CD4-positive, alpha-beta memory T cell (primary cell): ENCODE measurements at regions of chr9 and their contacts with region 1.

Region 1: DNA sequence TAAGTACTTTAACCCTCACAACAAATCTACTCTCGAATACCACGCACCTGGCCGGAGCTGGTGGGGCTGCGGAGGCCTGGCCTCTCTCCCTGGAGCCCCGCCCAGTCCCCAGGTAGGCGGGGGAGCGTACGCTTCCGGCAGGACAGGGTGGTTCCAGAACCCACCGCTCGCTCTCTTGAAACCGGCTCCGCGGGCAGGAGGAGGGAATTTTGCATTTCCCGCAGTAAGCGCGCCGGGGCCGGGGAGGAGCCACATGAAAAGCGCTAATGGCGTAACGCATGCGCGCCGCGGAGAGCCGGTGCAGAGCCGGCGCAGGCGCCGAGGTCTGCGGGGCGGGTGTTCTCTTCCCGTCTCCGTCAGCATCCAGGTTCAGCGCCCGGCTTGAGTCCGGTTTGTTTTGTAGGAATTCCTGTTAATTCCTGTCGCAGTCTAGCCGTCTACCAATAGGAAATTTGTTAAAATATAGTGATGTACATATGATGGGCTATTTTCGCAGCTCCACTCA is 20.8 kb downstream of the CAVIN4 start:
- DNase-seq: peak; percentile 77 to 83 (median 81)
- H3K4me3 ChIP-seq: peak overlapping the region in 1 of 2 donors; percentile 59
- H3K4me3 Mint-ChIP-seq: peak overlapping the region; percentile 72 to 88 (median 86)
- H3K27ac ChIP-seq: peak overlapping the region; percentile 49
- H3K27ac Mint-ChIP-seq: peak overlapping the region; percentile 16 to 93 (median 58)
- H3K4me1 ChIP-seq: peaks cover 15% of the 10 kb centered on the region
- H3K4me1 Mint-ChIP-seq: peaks cover 14 to 34% (median 27%) of the 10 kb centered on the region in 4 donors
- H3K27me3 ChIP-seq: no peaks in the 10 kb centered on the region
- H3K27me3 Mint-ChIP-seq: peaks cover 0 to 3% of the 10 kb centered on the region in 2 donors

Region 2: DNA sequence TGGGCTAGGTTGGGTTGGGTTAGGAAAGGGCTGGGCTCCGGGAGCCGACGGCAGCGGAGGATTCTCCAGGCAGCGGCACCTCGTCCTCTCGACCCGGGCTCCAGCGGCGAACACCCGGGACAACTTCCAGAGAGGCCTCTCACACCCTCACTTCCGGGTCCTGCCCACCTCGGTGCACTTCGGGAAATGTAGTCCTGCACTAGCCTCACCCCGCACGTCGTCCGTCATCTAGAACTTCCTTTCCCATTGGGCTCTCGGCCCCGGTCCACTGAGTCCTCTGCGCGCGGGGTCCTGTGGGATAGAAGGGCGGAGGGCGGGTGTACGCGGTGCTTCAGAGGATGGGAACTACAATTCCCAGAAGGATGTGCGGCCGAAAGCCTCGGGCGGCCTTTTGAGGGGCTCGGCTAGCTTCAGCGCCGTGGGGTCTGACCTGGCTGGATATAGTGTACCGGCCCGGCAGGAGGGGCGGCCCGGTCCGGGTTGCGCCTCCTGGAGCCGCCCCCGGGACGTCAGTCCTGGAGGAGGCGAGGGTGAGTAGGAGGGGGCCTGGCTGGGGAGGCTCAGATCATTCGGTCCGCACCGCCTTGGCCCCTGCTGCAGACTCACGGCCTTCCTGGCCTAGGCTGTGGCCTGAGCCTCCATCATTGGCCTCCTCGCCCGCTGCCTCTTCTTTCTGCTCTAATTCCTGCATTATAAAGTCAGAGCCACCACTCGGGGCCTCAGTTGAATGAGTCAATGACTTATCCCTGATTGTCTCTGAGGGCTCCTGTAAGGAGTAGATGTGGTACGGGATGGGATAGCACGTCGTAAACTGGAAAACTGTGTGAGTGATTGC is 499.6 kb before region 1 on chr9 and contains the starts of genes ERP44 and INVS:
- CTCF ChIA-PET with region 1: no interaction called
- POLR2A ChIA-PET with region 1: no interaction called
- intact Hi-C with region 1: loop called (anchors 5 kb)
- DNase-seq: peak; percentile 96 to 99 (median 96)
- H3K4me3 ChIP-seq: peak within 1 kb of the TSS; percentile 85 to 89
- H3K4me3 Mint-ChIP-seq: peak within 1 kb of the TSS; percentile 94 to 100 (median 100)
- H3K27ac ChIP-seq: peak within 1 kb of the TSS; percentile 80
- H3K27ac Mint-ChIP-seq: peak within 1 kb of the TSS; percentile 91 to 99 (median 98)
- H3K4me1 ChIP-seq: peaks cover 26% of the 10 kb centered on the region
- H3K4me1 Mint-ChIP-seq: peaks cover 21 to 56% (median 36%) of the 10 kb centered on the region in 4 donors
- H3K27me3 ChIP-seq: no peaks in the 10 kb centered on the region
- H3K27me3 Mint-ChIP-seq: no peaks in the 10 kb centered on the region
- total RNA-seq, gene ERP44: 16.5 to 17.0 TPM
- total RNA-seq, gene INVS: 17.6 to 22.9 TPM

Region 3: GRCh38 chr9:100426530-100427428 is 171.9 kb before region 1 on chr9 and contains the start of gene MSANTD3:
- CTCF ChIA-PET with region 1: no interaction called
- POLR2A ChIA-PET with region 1: interaction called, 6 read pairs
- intact Hi-C with region 1: loop called (anchors 5 kb)
- DNase-seq: peak; percentile 39 to 57 (median 48)
- H3K4me3 ChIP-seq: peak within 1 kb of the TSS; percentile 64 to 72
- H3K4me3 Mint-ChIP-seq: peak within 1 kb of the TSS; percentile 94 to 99 (median 96)
- H3K27ac ChIP-seq: peak within 1 kb of the TSS; percentile 40
- H3K27ac Mint-ChIP-seq: peak within 1 kb of the TSS; percentile 92 to 97 (median 95)
- H3K4me1 ChIP-seq: peaks cover 26% of the 10 kb centered on the region
- H3K4me1 Mint-ChIP-seq: peaks cover 27 to 50% (median 35%) of the 10 kb centered on the region in 4 donors
- H3K27me3 ChIP-seq: no peaks in the 10 kb centered on the region
- H3K27me3 Mint-ChIP-seq: peaks cover 1% of the 10 kb centered on the region in 2 donors
- total RNA-seq, gene MSANTD3: 14.4 to 14.8 TPM

Region 4: DNA sequence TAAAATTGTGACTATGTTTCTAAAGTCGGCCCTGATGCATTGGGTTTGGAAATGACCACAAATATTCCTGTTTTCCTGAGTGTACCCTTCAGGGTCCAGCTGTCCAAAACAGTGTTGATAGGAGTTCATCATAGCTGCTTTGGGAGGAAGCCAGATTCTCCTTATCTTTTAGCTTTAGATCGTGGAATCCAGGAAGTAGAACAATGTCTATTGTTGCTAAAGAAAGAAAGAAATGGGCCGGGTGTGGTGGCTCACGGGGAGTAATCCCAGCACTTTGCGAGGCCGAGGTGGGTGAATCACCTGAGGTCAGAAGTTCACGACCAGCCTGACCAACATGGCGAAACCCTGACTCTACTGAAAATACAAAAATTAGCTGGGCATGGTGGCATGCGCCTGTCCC is 11.3 kb before region 1 on chr9:
- CTCF ChIA-PET with region 1: interaction called, 16 read pairs
- POLR2A ChIA-PET with region 1: no interaction called
- intact Hi-C with region 1: no loop called
- DNase-seq: no peak
- H3K4me3 ChIP-seq: no peak overlapping the region
- H3K4me3 Mint-ChIP-seq: no peak overlapping the region
- H3K27ac ChIP-seq: no peak overlapping the region
- H3K27ac Mint-ChIP-seq: no peak overlapping the region
- H3K4me1 ChIP-seq: no peaks in the 10 kb centered on the region
- H3K4me1 Mint-ChIP-seq: no peaks in the 10 kb centered on the region
- H3K27me3 ChIP-seq: no peaks in the 10 kb centered on the region
- H3K27me3 Mint-ChIP-seq: no peaks in the 10 kb centered on the region

Region 5: DNA sequence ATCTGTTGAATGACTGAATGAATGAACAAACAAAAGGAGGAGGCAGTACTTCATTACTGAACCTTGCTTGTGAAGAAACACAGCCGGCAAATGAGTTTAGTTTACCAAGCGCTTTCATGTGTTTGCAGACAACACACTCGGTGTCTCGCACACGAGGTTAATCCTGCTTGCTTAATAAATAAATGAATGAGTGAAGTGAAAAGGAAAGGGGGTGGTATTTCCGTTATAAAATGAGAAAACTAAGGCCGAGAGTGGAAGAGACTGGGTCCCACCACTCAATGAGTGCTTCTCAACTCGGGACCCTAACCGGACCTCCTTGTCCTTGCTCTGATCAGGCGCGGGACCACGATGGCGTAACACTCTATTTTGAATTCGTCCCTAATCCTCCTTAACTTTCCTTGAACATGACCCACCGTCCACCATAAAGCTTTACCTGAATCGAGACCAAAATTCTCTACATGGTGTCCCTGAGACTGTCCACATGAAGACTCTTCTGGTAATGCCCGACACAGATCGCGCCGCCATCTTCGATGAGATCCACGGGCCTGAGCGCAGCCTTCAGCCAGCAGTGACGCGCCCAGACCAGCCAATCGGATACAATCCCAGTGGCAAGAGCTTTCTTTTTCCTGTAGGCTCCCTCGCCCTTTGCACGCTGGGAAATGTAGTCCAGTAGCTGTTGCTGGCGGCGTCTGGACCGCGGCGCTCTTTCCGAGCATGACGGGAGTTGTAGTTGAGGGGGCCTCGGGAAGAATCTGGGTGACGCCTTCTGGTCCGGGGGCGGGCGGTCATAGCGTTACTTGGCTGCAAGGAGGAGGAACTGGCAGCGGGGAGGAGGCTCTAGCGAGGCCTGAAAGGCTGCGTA is 799.6 kb after region 1 on chr9 and contains the starts of genes MRPL50 and ZNF189:
- CTCF ChIA-PET with region 1: interaction called, 3 read pairs
- POLR2A ChIA-PET with region 1: no interaction called
- intact Hi-C with region 1: loop called (anchors 5 kb)
- DNase-seq: peak; percentile 95 to 100 (median 97)
- H3K4me3 ChIP-seq: peak within 1 kb of the TSS; percentile 75 to 86
- H3K4me3 Mint-ChIP-seq: peak within 1 kb of the TSS; percentile 98 to 100 (median 99)
- H3K27ac ChIP-seq: peak within 1 kb of the TSS; percentile 93
- H3K27ac Mint-ChIP-seq: peak within 1 kb of the TSS; percentile 98 to 100 (median 99)
- H3K4me1 ChIP-seq: peaks cover 64% of the 10 kb centered on the region
- H3K4me1 Mint-ChIP-seq: peaks cover 61 to 87% (median 78%) of the 10 kb centered on the region in 4 donors
- H3K27me3 ChIP-seq: no peaks in the 10 kb centered on the region
- H3K27me3 Mint-ChIP-seq: no peaks in the 10 kb centered on the region
- total RNA-seq, gene MRPL50: 20.9 to 23.0 TPM
- total RNA-seq, gene ZNF189: 22.1 to 23.2 TPM